ENCODE measurements at regions of chr3 and their contacts with region 1.

Region 1: DNA sequence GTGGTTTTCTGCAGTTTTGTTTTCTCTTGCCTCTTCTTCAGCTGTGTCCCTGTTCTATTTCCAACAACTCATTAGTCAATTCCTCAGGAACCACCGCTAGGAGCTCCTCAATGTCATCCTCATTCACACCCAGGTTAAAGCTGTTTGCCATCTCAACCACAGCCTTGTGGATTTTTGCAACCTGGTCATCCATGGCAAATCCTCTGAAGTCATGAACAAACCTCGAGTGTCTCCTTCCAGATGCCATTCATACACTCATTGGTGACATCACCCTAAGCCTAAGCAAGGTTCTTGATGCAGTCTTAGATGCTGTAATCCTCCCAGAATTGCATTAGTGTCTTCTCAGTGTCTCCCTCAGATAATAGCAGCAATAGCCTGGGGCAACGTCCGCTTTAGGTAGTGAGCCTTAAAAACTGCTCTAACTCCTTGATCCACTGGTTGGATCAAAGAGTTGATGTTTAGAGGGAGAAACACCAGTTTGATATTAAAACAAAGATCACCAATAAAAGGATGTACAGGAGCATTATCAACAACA is 31.5 kb upstream of the ZNF502 start:
- DNase-seq: no peak
- H3K4me3 ChIP-seq: no peak overlapping the region
- H3K27ac ChIP-seq: no peak overlapping the region
- H3K4me1 ChIP-seq: peaks cover 5% of the 10 kb centered on the region
- CTCF ChIP-seq: no peak

Region 2: GRCh38 chr3:44883999-44884431 is 203.0 kb after region 1 on chr3:
- CTCF ChIA-PET with region 1: no interaction called
- POLR2A ChIA-PET with region 1: interaction called, 11 read pairs
- intact Hi-C with region 1: no loop called
- DNase-seq: no peak
- H3K4me3 ChIP-seq: no peak overlapping the region
- H3K27ac ChIP-seq: no peak overlapping the region
- H3K4me1 ChIP-seq: no peaks in the 10 kb centered on the region
- CTCF ChIP-seq: no peak

Measured in OCI-LY7 (cell line).